ENCODE measurements at regions of chr1 and their contacts with region 1.

Region 1: GRCh38 chr1:239951511-239952140 is 140.1 kb upstream of the FMN2 start:
- DNase-seq: peak in 4 of 5 donors; percentile 11 to 32 (median 20)
- H3K4me3 ChIP-seq: no peak overlapping the region
- H3K4me3 Mint-ChIP-seq: no peak overlapping the region
- H3K27ac ChIP-seq: no peak overlapping the region
- H3K27ac Mint-ChIP-seq: no peak overlapping the region
- H3K4me1 ChIP-seq: no peaks in the 10 kb centered on the region
- H3K4me1 Mint-ChIP-seq: peaks cover 0 to 2% (median 0%) of the 10 kb centered on the region in 4 donors
- H3K27me3 ChIP-seq: no peaks in the 10 kb centered on the region
- H3K27me3 Mint-ChIP-seq: peaks cover 0 to 2% of the 10 kb centered on the region in 2 donors

Region 2: DNA sequence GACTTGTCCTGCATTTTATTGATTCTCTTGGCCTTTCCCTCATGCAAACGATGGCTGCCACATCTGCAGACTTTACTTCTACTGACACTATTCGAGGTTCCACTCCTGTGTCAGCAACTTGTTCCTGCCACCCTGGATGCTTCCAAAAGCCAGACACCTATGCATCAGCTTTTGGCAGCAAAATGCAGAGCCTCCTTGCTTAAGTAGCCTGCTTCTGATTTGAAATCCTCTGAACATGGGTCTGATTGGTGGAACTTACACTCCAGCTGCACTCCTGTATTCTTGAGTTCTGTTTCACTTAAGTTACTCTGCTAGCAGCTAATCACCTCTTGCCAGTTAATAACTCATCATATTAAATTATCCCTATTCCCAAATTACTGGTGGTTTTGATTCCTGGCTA is 12.0 kb before region 1 on chr1:
- CTCF ChIA-PET with region 1: interaction called, 33 read pairs
- POLR2A ChIA-PET with region 1: no interaction called
- intact Hi-C with region 1: no loop called
- DNase-seq: no peak
- H3K4me3 ChIP-seq: no peak overlapping the region
- H3K4me3 Mint-ChIP-seq: no peak overlapping the region
- H3K27ac ChIP-seq: no peak overlapping the region
- H3K27ac Mint-ChIP-seq: no peak overlapping the region
- H3K4me1 ChIP-seq: no peaks in the 10 kb centered on the region
- H3K4me1 Mint-ChIP-seq: peaks cover 0 to under 1% (median 0%) of the 10 kb centered on the region in 4 donors
- H3K27me3 ChIP-seq: no peaks in the 10 kb centered on the region
- H3K27me3 Mint-ChIP-seq: peaks cover 0 to 8% of the 10 kb centered on the region in 2 donors

Region 3: DNA sequence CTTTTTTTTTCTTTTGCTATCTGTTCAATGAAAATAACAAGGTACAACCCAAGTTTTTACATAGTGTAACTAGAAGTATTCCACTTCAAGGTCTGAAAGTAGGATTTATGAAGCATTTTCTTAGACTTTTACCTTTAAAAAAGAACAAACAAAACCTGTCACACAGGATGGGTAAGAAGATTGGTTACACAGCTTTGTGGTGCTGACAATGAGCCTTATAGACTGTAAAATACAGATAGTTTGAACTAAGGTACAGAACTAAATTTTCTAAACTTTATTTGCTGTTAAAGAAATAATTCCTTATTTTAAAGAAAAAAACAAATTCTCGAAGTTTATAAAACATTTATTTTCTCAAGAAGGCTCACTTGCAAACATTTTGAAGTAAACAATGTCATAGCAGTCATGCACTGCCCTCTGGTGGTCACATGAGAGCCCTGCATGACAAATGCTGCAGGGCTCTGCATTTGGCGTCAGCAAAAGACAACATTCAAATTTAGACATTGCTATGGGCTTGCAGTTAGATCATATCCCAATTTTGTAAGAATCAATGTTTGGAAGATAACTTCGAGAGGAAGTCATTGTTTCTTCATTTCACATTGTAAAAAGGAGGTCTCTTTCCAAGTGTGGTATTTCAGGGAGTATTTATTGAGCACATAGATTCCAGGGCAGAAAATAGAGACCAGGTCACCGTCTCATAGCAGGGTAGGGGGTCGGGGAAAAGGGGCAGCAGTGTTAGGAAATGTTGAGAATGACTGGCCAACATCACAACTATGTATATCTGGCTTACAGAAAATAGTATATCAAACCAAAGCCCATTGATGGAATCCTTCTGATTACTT is 24.7 kb after region 1 on chr1:
- CTCF ChIA-PET with region 1: interaction called, 3 read pairs
- POLR2A ChIA-PET with region 1: no interaction called
- intact Hi-C with region 1: loop called (anchors 1 kb)
- DNase-seq: peak in 4 of 5 donors; percentile 19 to 30 (median 26)
- H3K4me3 ChIP-seq: no peak overlapping the region
- H3K4me3 Mint-ChIP-seq: no peak overlapping the region
- H3K27ac ChIP-seq: no peak overlapping the region
- H3K27ac Mint-ChIP-seq: no peak overlapping the region
- H3K4me1 ChIP-seq: no peaks in the 10 kb centered on the region
- H3K4me1 Mint-ChIP-seq: peaks cover 0 to 3% (median under 1%) of the 10 kb centered on the region in 4 donors
- H3K27me3 ChIP-seq: no peaks in the 10 kb centered on the region
- H3K27me3 Mint-ChIP-seq: peaks cover 4 to 6% of the 10 kb centered on the region in 2 donors